ENCODE measurements at regions of chr1 and their contacts with region 1.

Region 1: GRCh38 chr1:211698161-211699026 is 23.0 kb upstream of the NEK2 start:
- DNase-seq: peak; percentile 92
- ATAC-seq: peak; percentile 89
- H3K4me3 Mint-ChIP-seq: peak overlapping the region; percentile 63
- H3K27ac Mint-ChIP-seq: peak overlapping the region; percentile 60
- H3K4me1 Mint-ChIP-seq: peaks cover 42% of the 10 kb centered on the region
- H3K27me3 Mint-ChIP-seq: peaks cover 8% of the 10 kb centered on the region

Region 2: DNA sequence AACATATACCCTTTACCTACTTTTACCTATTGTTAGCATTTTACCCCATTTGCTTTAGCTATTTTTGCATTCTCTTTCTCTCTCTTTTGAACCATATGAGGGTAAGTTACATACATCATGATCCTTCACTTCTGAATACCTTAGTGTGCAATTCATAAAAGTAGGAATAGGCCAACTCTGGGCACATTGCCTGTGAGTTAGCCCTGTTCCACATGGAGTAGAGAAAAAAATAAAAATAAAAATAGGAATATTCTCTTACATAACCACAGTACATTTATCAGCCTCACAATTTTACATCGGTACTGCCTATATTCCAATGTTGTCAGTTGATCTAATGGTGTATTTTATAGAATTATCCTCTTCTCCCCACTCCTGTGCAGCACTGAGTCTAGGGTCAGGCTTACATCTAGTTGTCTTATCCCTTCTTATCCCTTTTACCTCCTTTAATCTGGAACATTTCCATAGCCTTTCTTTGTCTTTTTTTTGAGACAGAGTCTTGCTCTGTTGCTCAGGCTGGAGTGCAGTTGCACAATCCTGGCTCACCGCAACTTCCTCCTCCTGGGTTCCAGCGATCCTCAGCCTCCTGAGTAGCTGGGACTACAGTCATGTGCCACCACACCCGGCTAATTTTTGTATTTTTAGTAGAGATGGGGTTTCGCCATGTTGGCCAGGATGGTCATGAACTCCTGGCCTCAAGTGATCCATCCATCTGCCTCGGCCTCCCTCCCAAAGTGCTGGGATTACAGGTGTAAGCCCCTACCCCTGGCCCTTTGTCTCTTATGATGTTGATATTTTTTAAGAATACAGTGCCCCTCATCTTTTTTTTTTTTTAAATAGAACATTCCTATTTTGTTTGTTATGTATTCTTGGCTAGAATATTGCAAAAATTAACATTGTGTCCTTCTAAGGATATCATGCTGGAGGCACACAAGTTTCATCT is 108.3 kb before region 1 on chr1:
- POLR2A ChIA-PET with region 1: no interaction called
- DNase-seq: no peak
- ATAC-seq: no peak
- H3K4me3 Mint-ChIP-seq: peak overlapping the region; percentile 1
- H3K27ac Mint-ChIP-seq: no peak overlapping the region
- H3K4me1 Mint-ChIP-seq: peaks cover 6% of the 10 kb centered on the region
- H3K27me3 Mint-ChIP-seq: peaks cover 18% of the 10 kb centered on the region

Region 3: DNA sequence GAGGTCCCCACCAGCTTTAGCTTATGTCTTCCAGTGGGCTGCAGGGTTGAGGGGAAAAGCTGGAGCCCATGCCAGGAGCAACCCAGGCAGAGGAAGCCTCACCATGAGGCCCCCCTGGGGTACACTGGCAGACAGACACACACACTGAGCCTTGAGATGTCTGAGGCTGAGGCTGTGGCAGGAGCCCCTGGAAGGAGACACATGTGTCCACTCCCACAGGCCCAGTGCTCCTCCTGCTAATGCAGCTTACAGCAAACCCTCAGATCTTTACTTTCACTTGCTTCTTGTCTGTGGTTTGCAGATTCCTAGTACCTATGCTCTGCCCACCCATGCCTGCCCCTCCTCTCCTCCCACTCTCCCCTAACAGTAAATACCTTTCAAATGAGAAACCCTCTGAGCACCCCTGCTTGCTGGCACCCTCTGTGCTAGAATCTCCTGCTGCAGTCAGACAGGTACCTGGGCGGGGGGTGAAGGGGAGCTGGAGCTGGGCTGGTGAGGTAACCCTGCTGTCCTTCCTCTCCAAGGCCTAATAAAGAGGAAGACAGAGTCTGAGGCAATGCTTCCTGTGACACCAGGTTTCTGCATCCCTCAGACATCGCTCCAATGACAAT is 40.4 kb after region 1 on chr1:
- POLR2A ChIA-PET with region 1: interaction called, 11 read pairs
- DNase-seq: peak; percentile 58
- ATAC-seq: peak; percentile 77
- H3K4me3 Mint-ChIP-seq: peak overlapping the region; percentile 77
- H3K27ac Mint-ChIP-seq: peak overlapping the region; percentile 93
- H3K4me1 Mint-ChIP-seq: peaks cover 34% of the 10 kb centered on the region
- H3K27me3 Mint-ChIP-seq: peaks cover 2% of the 10 kb centered on the region

Region 4: GRCh38 chr1:211830330-211831142 is 132.1 kb after region 1 on chr1 and contains the start of gene LPGAT1:
- POLR2A ChIA-PET with region 1: interaction called, 10 read pairs
- DNase-seq: peak; percentile 84
- ATAC-seq: peak; percentile 72
- H3K4me3 Mint-ChIP-seq: peak within 1 kb of the TSS; percentile 90
- H3K27ac Mint-ChIP-seq: peak within 1 kb of the TSS; percentile 88
- H3K4me1 Mint-ChIP-seq: peaks cover 55% of the 10 kb centered on the region
- H3K27me3 Mint-ChIP-seq: no peaks in the 10 kb centered on the region
- total RNA-seq, gene LPGAT1: 45.5 to 47.4 TPM

Measured in activated naive CD8-positive, alpha-beta T cell treated with anti-CD3 and anti-CD28 coated beads, Interleukin-2, amount 10 ng/mL, durations not matched to agents 7 days and 5 days (primary cell).